CD4-positive, alpha-beta memory T cell (primary cell): ENCODE measurements at regions of chr14 and their contacts with region 1.

Region 1: GRCh38 chr14:52741865-52742264 is 11.9 kb downstream of the STYX start:
- DNase-seq: peak; percentile 34 to 47 (median 39)
- H3K4me3 ChIP-seq: peak overlapping the region; percentile 2 to 24
- H3K4me3 Mint-ChIP-seq: peak overlapping the region; percentile 72 to 94 (median 83)
- H3K27ac ChIP-seq: peak overlapping the region; percentile 82
- H3K27ac Mint-ChIP-seq: peak overlapping the region; percentile 90 to 97 (median 94)
- H3K4me1 ChIP-seq: peaks cover 95% of the 10 kb centered on the region
- H3K4me1 Mint-ChIP-seq: peaks cover 45 to 82% (median 65%) of the 10 kb centered on the region in 4 donors
- H3K27me3 ChIP-seq: no peaks in the 10 kb centered on the region
- H3K27me3 Mint-ChIP-seq: no peaks in the 10 kb centered on the region

Region 2: DNA sequence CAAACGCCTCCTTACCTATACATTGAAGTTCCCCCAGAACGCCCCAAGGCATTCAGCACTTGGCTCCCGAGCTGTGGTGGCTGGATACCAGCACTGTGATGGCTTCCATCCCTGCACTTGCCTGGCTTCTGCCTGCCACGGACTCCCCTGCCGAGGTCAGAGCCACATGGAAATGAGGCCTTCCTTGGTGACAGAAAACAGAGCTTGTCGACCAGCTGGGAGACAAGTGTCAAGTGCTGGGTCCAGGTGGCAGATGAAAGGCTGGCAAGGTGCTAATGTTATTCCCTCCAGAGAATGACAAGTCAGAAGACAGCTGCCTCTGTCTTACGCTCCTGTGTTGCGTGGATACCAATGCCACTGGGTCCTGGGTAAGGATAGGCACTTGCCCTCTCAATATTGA is 907.6 kb before region 1 on chr14:
- CTCF ChIA-PET with region 1: no interaction called
- POLR2A ChIA-PET with region 1: no interaction called
- intact Hi-C with region 1: no loop called
- DNase-seq: no peak
- H3K4me3 ChIP-seq: no peak overlapping the region
- H3K4me3 Mint-ChIP-seq: no peak overlapping the region
- H3K27ac ChIP-seq: no peak overlapping the region
- H3K27ac Mint-ChIP-seq: no peak overlapping the region
- H3K4me1 ChIP-seq: no peaks in the 10 kb centered on the region
- H3K4me1 Mint-ChIP-seq: no peaks in the 10 kb centered on the region
- H3K27me3 ChIP-seq: no peaks in the 10 kb centered on the region
- H3K27me3 Mint-ChIP-seq: no peaks in the 10 kb centered on the region

Region 3: GRCh38 chr14:52609445-52610044 is 132.3 kb before region 1 on chr14:
- CTCF ChIA-PET with region 1: no interaction called
- POLR2A ChIA-PET with region 1: no interaction called
- intact Hi-C with region 1: no loop called
- DNase-seq: no peak
- H3K4me3 ChIP-seq: no peak overlapping the region
- H3K4me3 Mint-ChIP-seq: no peak overlapping the region
- H3K27ac ChIP-seq: no peak overlapping the region
- H3K27ac Mint-ChIP-seq: no peak overlapping the region
- H3K4me1 ChIP-seq: no peaks in the 10 kb centered on the region
- H3K4me1 Mint-ChIP-seq: no peaks in the 10 kb centered on the region
- H3K27me3 ChIP-seq: no peaks in the 10 kb centered on the region
- H3K27me3 Mint-ChIP-seq: peaks cover 0 to 9% of the 10 kb centered on the region in 2 donors

Region 4: GRCh38 chr14:52706724-52707706 is 34.9 kb before region 1 on chr14 and contains the start of gene PSMC6:
- CTCF ChIA-PET with region 1: no interaction called
- POLR2A ChIA-PET with region 1: interaction called, 25 read pairs
- intact Hi-C with region 1: loop called (anchors 1 kb)
- DNase-seq: peak; percentile 88 to 95 (median 90)
- H3K4me3 ChIP-seq: peak within 1 kb of the TSS; percentile 92 to 96
- H3K4me3 Mint-ChIP-seq: peak within 1 kb of the TSS; percentile 92 to 100 (median 96)
- H3K27ac ChIP-seq: peak within 1 kb of the TSS; percentile 77
- H3K27ac Mint-ChIP-seq: peak within 1 kb of the TSS; percentile 94 to 99 (median 98)
- H3K4me1 ChIP-seq: peaks cover 43% of the 10 kb centered on the region
- H3K4me1 Mint-ChIP-seq: peaks cover 20 to 56% (median 36%) of the 10 kb centered on the region in 4 donors
- H3K27me3 ChIP-seq: no peaks in the 10 kb centered on the region
- H3K27me3 Mint-ChIP-seq: no peaks in the 10 kb centered on the region
- total RNA-seq, gene PSMC6: 85.7 to 86.0 TPM

Region 5: GRCh38 chr14:52724360-52724644 is 17.6 kb before region 1 on chr14:
- CTCF ChIA-PET with region 1: interaction called, 16 read pairs
- POLR2A ChIA-PET with region 1: interaction called, 108 read pairs
- intact Hi-C with region 1: no loop called
- DNase-seq: no peak
- H3K4me3 ChIP-seq: no peak overlapping the region
- H3K4me3 Mint-ChIP-seq: no peak overlapping the region
- H3K27ac ChIP-seq: no peak overlapping the region
- H3K27ac Mint-ChIP-seq: peak overlapping the region in 3 of 7 donors; percentile 15 to 88 (median 77)
- H3K4me1 ChIP-seq: peaks cover 28% of the 10 kb centered on the region
- H3K4me1 Mint-ChIP-seq: peaks cover 16 to 34% (median 30%) of the 10 kb centered on the region in 4 donors
- H3K27me3 ChIP-seq: no peaks in the 10 kb centered on the region
- H3K27me3 Mint-ChIP-seq: no peaks in the 10 kb centered on the region

Region 6: GRCh38 chr14:52729925-52730667 is 11.8 kb before region 1 on chr14 and contains the start of gene STYX:
- CTCF ChIA-PET with region 1: interaction called, 16 read pairs
- POLR2A ChIA-PET with region 1: interaction called, 108 read pairs
- intact Hi-C with region 1: loop called (anchors 1 kb)
- DNase-seq: peak; percentile 95 to 97 (median 96)
- H3K4me3 ChIP-seq: peak within 1 kb of the TSS; percentile 71
- H3K4me3 Mint-ChIP-seq: peak within 1 kb of the TSS; percentile 80 to 96 (median 93)
- H3K27ac ChIP-seq: peak within 1 kb of the TSS; percentile 88
- H3K27ac Mint-ChIP-seq: peak within 1 kb of the TSS; percentile 79 to 97 (median 95)
- H3K4me1 ChIP-seq: peaks cover 36% of the 10 kb centered on the region
- H3K4me1 Mint-ChIP-seq: peaks cover 17 to 53% (median 38%) of the 10 kb centered on the region in 4 donors
- H3K27me3 ChIP-seq: no peaks in the 10 kb centered on the region
- H3K27me3 Mint-ChIP-seq: no peaks in the 10 kb centered on the region
- total RNA-seq, gene STYX: 47.1 to 47.3 TPM

Region 7: DNA sequence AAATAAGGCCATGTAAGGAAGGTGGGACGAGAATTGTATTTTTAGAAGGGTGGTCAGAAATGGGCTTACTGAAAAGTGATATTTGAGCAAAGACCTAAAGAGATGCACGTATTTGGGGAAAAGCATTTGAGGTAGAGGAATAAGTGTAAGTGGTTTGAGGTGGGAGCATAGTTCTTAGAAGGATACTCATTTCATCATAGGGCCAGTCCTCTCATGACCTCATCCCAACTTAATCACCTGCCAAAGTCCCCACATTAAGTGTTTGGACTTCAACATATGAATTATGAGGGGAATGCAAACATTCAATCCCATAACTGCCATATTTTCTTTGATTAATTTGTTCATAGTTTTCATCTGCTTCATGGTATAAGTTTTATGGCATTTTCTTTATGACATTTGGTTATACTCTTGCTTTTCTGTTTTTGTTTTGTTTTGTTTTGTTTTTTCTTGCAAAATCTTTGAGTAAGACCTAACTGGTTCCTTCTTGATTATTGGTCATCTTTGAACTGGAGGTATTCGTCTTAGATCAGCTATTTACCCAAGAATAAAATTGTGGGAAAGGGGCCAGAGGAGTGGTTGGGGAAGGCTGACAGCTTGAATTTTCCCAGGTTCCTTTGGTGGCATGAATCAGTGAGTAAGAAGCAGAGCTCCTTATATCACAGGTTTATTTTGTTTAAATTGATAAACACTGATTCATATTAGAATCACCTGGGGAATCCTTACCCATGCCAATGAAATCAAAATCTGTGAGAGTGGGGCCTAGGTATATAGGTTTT is 25.4 kb after region 1 on chr14:
- CTCF ChIA-PET with region 1: interaction called, 5 read pairs
- POLR2A ChIA-PET with region 1: interaction called, 12 read pairs
- intact Hi-C with region 1: no loop called
- DNase-seq: no peak
- H3K4me3 ChIP-seq: no peak overlapping the region
- H3K4me3 Mint-ChIP-seq: no peak overlapping the region
- H3K27ac ChIP-seq: no peak overlapping the region
- H3K27ac Mint-ChIP-seq: peak overlapping the region in 4 of 7 donors; percentile 32 to 81 (median 73)
- H3K4me1 ChIP-seq: peaks cover 8% of the 10 kb centered on the region
- H3K4me1 Mint-ChIP-seq: peaks cover 18 to 33% (median 22%) of the 10 kb centered on the region in 4 donors
- H3K27me3 ChIP-seq: no peaks in the 10 kb centered on the region
- H3K27me3 Mint-ChIP-seq: no peaks in the 10 kb centered on the region

Region 8: DNA sequence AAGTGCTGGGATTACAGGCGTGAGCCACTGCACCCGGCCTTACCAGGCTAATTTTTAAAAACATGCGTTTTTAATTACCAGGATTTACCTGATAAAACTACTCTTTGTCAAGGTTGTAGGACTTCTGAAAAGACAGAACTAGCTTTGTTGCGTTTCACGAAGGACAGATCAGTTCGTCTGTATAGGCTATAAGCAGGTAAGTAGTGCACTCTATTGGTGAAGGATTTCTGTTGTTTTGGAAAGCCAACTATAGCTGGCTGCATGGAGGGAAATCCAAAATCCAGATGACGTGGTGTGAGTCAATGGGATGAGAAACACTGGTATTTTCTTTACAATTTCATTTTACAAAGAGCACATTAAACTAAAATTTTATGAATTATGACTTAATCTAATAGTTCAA is 35.0 kb after region 1 on chr14:
- CTCF ChIA-PET with region 1: interaction called, 3 read pairs
- POLR2A ChIA-PET with region 1: interaction called, 11 read pairs
- intact Hi-C with region 1: no loop called
- DNase-seq: peak in 1 of 5 donors; percentile 12
- H3K4me3 ChIP-seq: no peak overlapping the region
- H3K4me3 Mint-ChIP-seq: no peak overlapping the region
- H3K27ac ChIP-seq: no peak overlapping the region
- H3K27ac Mint-ChIP-seq: peak overlapping the region in 2 of 7 donors; percentile 10 to 15
- H3K4me1 ChIP-seq: no peaks in the 10 kb centered on the region
- H3K4me1 Mint-ChIP-seq: peaks cover 0 to 5% (median 2%) of the 10 kb centered on the region in 4 donors
- H3K27me3 ChIP-seq: no peaks in the 10 kb centered on the region
- H3K27me3 Mint-ChIP-seq: no peaks in the 10 kb centered on the region

Region 9: DNA sequence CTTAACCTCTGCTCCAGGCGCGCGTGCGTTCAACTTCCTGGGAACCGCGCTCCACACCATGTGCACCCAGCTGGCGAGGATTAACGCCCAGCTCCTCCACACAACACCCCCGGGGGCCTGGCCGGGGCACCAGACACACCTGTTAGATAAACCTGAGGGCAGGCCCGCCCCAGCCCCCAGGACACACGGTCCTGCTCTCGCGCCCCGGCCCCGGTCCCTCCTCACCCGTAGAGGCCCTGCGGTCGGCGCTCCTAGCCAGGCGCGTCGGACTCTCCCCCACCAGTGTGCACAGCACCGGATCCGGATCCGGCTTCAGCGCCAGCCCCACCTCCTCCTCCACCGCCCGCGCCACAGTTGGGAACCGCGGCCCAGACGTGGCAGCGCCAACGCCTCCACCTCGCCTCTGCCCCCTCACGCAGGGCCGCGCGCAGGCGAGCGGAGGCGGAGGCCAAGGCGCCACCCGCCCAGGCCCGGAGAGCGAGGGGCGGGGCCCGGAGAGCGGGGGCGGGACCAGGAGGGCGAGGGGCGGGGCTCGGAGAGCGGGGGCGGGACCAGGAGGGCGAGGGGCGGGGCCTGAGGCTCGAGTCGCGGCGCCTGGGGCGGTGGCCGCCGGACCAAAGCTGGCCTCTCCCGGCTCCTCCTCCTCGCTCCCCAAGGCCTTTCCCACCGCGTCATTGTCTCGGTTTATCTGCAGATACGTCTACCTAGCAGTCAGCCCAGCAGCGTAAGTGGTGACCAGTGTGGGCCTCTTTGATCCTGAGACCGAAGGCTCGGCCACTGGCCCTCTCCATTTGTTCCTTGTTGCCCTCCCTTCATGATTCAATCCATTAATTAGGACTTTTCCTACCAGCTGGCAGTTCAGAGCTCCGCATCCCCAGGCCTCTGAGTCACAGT is 49.6 kb after region 1 on chr14 and contains the start of gene GNPNAT1:
- CTCF ChIA-PET with region 1: interaction called, 4 read pairs
- POLR2A ChIA-PET with region 1: interaction called, 24 read pairs
- intact Hi-C with region 1: no loop called
- DNase-seq: peak; percentile 90 to 93 (median 92)
- H3K4me3 ChIP-seq: peak within 1 kb of the TSS; percentile 57 to 90
- H3K4me3 Mint-ChIP-seq: peak within 1 kb of the TSS; percentile 88 to 97 (median 92)
- H3K27ac ChIP-seq: peak within 1 kb of the TSS; percentile 70
- H3K27ac Mint-ChIP-seq: peak within 1 kb of the TSS; percentile 90 to 96 (median 94)
- H3K4me1 ChIP-seq: peaks cover 32% of the 10 kb centered on the region
- H3K4me1 Mint-ChIP-seq: peaks cover 27 to 48% (median 36%) of the 10 kb centered on the region in 4 donors
- H3K27me3 ChIP-seq: no peaks in the 10 kb centered on the region
- H3K27me3 Mint-ChIP-seq: no peaks in the 10 kb centered on the region
- total RNA-seq, gene GNPNAT1: 10.0 to 15.2 TPM